Cardiac septum (tissue), 1 donor: ENCODE measurements at regions of chr14 and their contacts with region 1.

Region 1: DNA sequence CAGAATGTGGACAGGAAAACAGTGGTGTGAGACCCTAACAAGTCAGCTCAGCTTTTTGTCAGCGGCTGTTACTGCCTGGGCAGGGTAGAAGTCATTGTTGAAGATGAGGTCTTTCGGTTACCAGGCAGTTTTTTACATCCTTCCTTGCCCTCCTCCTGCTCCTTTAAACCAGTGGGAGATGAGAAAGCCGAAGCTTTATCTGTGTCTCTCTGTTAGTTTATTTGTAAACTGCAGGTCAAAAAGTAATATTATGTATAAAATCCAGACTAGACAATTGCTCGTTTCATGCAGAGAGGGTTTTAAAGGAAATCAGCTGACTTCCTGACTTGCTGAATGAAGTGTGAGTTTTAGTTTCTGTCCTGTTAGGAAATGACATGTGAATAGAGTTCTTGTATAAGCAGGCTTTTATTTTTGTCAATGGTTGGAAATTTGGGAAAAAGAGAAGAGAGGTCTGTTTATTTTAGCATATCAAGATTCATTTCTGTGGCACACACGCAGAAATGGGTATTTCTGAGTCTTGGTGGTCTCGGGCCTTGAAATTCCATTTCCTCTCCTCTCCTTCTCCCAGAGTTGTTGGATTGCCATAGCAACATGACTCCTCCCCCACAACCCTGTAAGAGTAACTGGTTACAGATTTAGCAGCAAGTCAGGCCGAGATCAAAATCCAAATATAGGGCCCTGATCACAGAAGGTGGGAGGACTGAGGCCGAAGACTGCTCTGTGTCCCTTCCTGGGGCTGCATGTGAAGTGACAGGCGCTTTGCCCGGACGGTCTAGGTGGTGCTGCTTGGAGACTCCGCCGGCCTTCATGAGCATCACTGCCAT is 60.8 kb downstream of the SAMD4A start:
- DNase-seq: peak; percentile 85

Region 2: DNA sequence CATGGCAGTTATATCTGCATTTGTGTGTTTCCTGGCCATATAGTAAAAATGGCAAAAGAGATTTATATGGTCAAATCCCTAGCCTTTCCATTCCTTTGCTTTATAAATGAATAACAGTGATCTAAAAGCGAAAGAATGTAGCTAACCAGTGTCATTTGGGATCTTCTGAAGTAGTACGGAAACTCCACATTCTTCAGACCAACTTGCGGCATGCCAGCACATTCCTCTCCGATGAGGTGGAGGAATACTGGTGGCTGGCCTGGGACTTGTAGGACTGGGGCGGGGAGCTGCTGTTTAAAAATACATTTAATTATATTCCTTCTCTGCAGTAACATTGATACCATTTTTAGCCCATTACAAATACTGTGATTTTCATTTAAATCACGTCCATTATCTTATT is 24.4 kb after region 1 on chr14:
- intact Hi-C with region 1: loop called (anchors 2 kb)
- DNase-seq: peak; percentile 89